ENCODE measurements at regions of chr7 and their contacts with region 1.

Region 1: GRCh38 chr7:119935418-119936025 is 337.5 kb upstream of the KCND2 start:
- DNase-seq: no peak
- H3K4me3 Mint-ChIP-seq: no peak overlapping the region
- H3K27ac Mint-ChIP-seq: no peak overlapping the region
- H3K4me1 Mint-ChIP-seq: no peaks in the 10 kb centered on the region
- H3K27me3 Mint-ChIP-seq: no peaks in the 10 kb centered on the region

Region 2: DNA sequence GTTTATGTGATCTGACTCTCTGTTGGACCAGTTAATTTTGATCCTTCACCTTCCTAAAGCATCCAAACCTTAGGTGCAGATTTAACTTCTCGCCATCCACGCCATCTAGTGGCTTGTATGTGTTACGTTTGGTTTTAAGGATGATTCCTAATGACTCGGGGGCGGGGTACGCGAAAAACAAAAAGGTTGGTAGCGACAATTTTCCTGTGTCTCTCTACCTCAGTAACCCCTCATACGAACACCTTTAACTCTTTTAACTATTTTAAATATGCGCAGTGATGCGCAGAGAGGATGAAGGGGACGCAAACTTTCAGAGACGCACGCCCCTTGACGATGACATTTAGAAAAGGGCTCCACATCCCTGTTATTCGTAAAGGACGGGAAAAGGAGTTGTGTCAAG is 336.7 kb after region 1 on chr7:
- CTCF ChIA-PET with region 1: no interaction called
- POLR2A ChIA-PET with region 1: no interaction called
- intact Hi-C with region 1: loop called (anchors 5 kb)
- DNase-seq: no peak
- H3K4me3 Mint-ChIP-seq: no peak overlapping the region
- H3K27ac Mint-ChIP-seq: no peak overlapping the region
- H3K4me1 Mint-ChIP-seq: peaks cover 12% of the 10 kb centered on the region
- H3K27me3 Mint-ChIP-seq: peaks cover 23% of the 10 kb centered on the region

Region 3: DNA sequence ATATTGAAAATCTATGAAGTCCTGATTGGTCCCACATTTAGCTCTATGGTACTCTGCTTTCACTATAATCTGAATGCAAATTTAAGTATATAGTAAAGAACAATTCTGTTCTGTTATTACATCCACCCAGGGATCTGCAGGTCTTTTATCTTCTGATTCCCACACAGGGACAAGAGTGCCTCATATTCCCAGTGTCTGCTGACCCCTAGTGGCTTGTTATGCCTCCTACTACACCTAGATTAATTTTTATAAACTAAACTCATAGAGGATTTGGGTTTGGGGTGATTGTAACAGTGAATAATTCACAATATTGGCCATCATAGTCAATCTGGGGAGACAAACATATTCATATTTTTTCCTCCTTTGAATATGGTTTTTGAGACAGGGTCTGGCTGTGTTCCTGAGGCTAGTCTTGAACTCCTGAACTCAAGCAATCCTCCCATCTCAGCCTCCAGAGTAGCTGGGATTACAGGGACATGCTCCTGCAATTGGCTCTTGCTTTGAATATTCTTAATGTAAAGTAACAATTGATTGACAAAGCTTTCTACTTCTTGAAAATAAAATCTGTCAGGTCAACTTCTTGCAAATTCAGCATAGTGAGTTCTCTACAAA is 619.5 kb after region 1 on chr7:
- CTCF ChIA-PET with region 1: no interaction called
- POLR2A ChIA-PET with region 1: no interaction called
- intact Hi-C with region 1: loop called (anchors 10 kb)
- DNase-seq: no peak
- H3K4me3 Mint-ChIP-seq: no peak overlapping the region
- H3K27ac Mint-ChIP-seq: no peak overlapping the region
- H3K4me1 Mint-ChIP-seq: no peaks in the 10 kb centered on the region
- H3K27me3 Mint-ChIP-seq: no peaks in the 10 kb centered on the region

Measured in activated CD4-positive, alpha-beta memory T cell treated with anti-CD3 and anti-CD28 coated beads for 36 hours (primary cell).